Activated CD4-positive, alpha-beta T cell treated with anti-CD3 and anti-CD28 coated beads, Interleukin-2, amount 10 ng/mL, durations not matched to agents 24 days and 14 days (primary cell): ENCODE measurements at regions of chr7 and their contacts with region 1.

Region 1: DNA sequence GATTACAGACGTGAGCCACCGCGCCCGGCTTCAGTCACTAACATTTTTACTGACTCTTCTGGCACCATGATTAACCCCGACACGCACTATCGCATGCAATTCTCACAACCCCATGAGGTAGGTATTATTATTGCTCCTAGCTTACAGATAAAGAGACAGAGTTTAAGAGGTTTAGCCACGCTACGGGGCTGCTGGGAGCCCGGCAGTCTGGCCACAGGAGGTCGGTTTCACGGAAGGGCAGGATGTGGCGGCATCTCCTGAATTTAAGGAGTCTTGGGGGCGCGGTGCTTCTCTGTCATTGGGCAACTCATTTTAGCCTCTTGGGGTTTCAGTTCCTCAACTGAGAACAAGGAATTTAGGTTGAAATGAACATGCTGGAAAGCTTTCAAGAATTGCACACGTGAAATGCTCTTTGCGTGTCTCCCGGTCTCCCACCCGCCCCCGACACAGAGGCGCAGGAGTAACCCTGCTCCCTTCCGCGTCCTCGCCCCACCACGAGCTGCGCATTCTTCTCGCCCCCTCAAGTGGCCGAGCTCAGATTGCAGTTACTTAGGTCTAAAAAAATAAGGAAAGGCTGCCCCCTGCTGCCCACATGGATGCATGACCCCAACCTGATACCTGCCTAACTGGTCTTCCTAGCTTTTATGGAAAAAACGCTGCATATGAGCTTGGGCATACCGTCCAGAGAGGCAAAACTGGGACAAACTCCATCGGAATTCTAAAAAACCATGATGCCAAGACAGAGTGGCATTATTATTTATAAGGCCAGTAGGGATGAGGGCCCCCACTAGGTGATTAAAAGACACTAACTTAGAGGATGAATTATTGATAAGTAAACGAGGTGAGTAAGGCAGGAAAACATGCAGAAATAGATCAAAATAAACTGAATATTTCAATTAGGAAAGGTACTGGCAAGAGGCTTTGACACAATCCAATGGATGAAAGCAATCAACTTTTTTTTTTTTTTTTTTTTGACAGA is 12.4 kb downstream of the PRSS2 start:
- DNase-seq: peak; percentile 91
- H3K4me3 Mint-ChIP-seq: peak overlapping the region; percentile 79
- H3K27ac Mint-ChIP-seq: peak overlapping the region; percentile 83
- H3K4me1 Mint-ChIP-seq: peaks cover 8% of the 10 kb centered on the region
- H3K27me3 Mint-ChIP-seq: no peaks in the 10 kb centered on the region

Region 2: DNA sequence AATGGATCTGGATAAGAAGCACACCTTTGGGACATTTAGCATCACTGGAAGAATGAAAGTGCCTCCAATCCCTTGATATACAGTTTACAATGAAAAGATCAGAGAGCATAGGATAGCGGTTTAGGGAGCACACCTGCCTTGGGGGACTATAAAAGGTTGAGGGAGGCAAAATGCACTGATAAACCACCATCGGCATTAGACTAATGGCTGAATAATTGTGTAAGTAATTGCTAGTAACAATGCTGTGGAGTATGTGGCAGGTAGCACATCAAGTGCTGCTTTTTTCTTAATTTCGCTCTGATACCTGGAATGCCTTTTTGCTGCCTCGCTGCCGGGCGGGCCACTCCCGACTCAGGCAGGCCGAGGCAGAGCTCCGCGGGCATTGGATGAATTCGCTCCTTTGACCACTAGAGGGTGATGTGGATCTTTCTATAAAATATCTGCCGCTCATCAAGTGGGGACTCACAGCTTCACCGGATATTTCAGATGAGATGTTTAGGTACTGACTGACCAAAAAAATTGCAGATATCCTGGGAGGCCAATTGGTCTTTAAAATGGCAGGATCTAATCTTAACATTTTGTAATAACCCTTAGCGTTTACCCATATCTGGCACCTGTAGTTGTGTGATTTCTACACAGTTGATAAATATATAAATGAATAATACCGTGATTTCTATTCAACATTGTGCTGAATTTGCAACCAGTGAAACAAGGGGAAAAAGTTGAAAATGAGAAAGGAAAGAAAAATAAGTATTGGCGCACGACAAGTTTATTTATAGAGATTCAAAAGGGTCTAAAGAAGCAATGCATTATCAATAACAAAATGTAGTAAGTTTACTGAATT is 150.7 kb before region 1 on chr7:
- intact Hi-C with region 1: loop called (anchors 1 kb)
- DNase-seq: peak; percentile 86
- H3K4me3 Mint-ChIP-seq: no peak overlapping the region
- H3K27ac Mint-ChIP-seq: no peak overlapping the region
- H3K4me1 Mint-ChIP-seq: peaks cover 13% of the 10 kb centered on the region
- H3K27me3 Mint-ChIP-seq: peaks cover 12% of the 10 kb centered on the region

Region 3: GRCh38 chr7:142669074-142669654 is 114.0 kb before region 1 on chr7:
- intact Hi-C with region 1: loop called (anchors 1 kb)
- DNase-seq: peak; percentile 55
- H3K4me3 Mint-ChIP-seq: no peak overlapping the region
- H3K27ac Mint-ChIP-seq: no peak overlapping the region
- H3K4me1 Mint-ChIP-seq: peaks cover 19% of the 10 kb centered on the region
- H3K27me3 Mint-ChIP-seq: peaks cover 3% of the 10 kb centered on the region

Region 4: GRCh38 chr7:142711746-142712619 is 71.2 kb before region 1 on chr7:
- intact Hi-C with region 1: loop called (anchors 1 kb)
- DNase-seq: peak; percentile 68
- H3K4me3 Mint-ChIP-seq: peak overlapping the region; percentile 84
- H3K27ac Mint-ChIP-seq: peak overlapping the region; percentile 81
- H3K4me1 Mint-ChIP-seq: peaks cover 45% of the 10 kb centered on the region
- H3K27me3 Mint-ChIP-seq: no peaks in the 10 kb centered on the region

Region 5: GRCh38 chr7:142771353-142771723 is 11.9 kb before region 1 on chr7:
- intact Hi-C with region 1: no loop called
- DNase-seq: no peak
- H3K4me3 Mint-ChIP-seq: no peak overlapping the region
- H3K27ac Mint-ChIP-seq: no peak overlapping the region
- H3K4me1 Mint-ChIP-seq: peaks cover 3% of the 10 kb centered on the region
- H3K27me3 Mint-ChIP-seq: peaks cover 4% of the 10 kb centered on the region

Region 6: DNA sequence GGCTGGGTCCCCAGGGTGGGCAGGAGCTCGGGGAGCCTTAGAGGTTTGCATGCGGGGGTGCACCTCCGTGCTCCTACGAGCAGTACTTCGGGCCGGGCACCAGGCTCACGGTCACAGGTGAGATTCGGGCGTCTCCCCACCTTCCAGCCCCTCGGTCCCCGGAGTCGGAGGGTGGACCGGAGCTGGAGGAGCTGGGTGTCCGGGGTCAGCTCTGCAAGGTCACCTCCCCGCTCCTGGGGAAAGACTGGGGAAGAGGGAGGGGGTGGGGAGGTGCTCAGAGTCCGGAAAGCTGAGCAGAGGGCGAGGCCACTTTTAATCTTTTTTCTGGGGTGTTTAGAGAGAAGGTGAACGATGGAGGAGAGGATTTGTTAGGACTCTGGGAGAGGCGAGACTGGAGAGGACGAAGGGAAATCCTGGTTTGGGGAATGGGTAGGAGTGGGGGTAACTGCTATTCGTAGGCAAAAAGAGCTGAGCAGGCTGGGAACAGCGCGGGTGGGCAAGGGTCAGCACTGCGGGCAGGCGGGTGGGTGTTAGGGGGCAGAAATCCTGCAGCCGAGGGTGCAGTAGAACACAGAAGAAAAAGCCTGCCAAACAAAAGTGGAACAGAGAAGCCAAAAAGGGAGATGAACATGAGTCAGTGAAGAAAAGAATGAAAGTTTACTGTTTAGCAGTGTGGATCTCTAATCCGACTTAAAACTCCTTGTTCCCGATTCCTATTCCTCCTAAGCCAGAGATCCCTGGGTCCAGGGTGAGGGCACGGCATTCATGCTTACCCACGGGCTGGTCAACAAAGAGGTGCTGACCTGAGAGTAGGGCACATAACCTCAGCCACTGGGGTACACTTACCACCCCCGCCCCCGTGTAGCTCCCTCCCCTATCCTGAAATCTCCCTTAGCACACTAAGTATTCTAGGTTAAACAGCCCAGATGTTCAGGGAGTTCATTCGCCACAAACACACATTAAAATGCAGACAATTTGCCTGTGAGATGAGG is 14.5 kb after region 1 on chr7:
- intact Hi-C with region 1: loop called (anchors 1 kb)
- DNase-seq: peak; percentile 78
- H3K4me3 Mint-ChIP-seq: peak overlapping the region; percentile 100
- H3K27ac Mint-ChIP-seq: peak overlapping the region; percentile 99
- H3K4me1 Mint-ChIP-seq: peaks cover 70% of the 10 kb centered on the region
- H3K27me3 Mint-ChIP-seq: no peaks in the 10 kb centered on the region